ENCODE measurements at regions of chr21 and their contacts with region 1.

Region 1: GRCh38 chr21:33374450-33375096 is 28.6 kb upstream of the IFNGR2 start:
- DNase-seq: peak in 7 of 9 donors; percentile 25 to 61 (median 49)
- ATAC-seq: peak; percentile 88
- H3K4me3 ChIP-seq: no peak overlapping the region
- H3K4me3 Mint-ChIP-seq: no peak overlapping the region
- H3K27ac ChIP-seq: no peak overlapping the region
- H3K27ac Mint-ChIP-seq: peak overlapping the region in 2 of 9 donors; percentile 21 to 45
- H3K4me1 ChIP-seq: peaks cover 0 to 3% of the 10 kb centered on the region in 2 donors
- H3K4me1 Mint-ChIP-seq: peaks cover 6 to 23% (median 12%) of the 10 kb centered on the region in 7 donors
- H3K27me3 ChIP-seq: peaks cover 0 to 6% of the 10 kb centered on the region in 2 donors
- H3K27me3 Mint-ChIP-seq: peaks cover 0 to 36% (median 4%) of the 10 kb centered on the region in 5 donors

Region 2: DNA sequence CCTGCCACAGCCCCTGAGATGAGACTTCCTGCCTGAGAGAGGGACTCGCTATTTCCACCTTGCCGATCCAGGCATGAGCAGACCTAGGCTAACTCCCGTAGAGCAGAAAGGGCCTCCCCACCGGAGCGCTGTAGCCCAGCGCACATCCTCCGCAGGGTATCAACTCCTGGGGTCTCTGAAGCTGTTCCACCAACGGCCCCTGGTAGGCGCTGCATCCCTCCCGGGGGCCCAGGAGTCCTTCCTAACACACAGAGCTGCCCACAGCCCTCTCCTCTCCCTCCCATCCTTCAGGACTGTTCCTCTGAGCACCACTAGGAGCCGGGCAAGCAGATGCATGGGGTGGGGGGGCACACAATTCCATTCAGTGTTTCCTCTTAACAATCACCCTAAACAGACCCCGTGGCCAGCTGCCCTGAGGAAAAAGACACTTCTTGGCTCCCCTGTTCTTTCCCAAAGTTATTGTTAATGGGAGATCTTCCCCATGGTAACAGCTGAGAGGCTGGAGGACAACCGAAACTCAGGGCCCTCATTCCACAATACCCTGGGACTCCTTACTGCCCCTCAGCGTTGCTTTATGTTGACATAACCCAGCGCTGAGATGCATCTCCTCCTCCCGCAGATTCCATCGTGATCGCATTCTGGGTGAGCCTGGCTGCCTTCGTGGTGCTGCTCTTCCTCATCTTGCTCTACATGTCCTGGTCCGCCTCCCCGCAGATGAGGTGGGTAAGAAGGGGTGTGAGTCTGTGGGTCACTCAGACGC is 1068.4 kb before region 1 on chr21:
- CTCF ChIA-PET with region 1: no interaction called
- POLR2A ChIA-PET with region 1: no interaction called
- intact Hi-C with region 1: no loop called
- DNase-seq: no peak
- ATAC-seq: no peak
- H3K4me3 ChIP-seq: no peak overlapping the region
- H3K4me3 Mint-ChIP-seq: no peak overlapping the region
- H3K27ac ChIP-seq: no peak overlapping the region
- H3K27ac Mint-ChIP-seq: no peak overlapping the region
- H3K4me1 ChIP-seq: no peaks in the 10 kb centered on the region
- H3K4me1 Mint-ChIP-seq: peaks cover 0 to 4% (median 0%) of the 10 kb centered on the region in 7 donors
- H3K27me3 ChIP-seq: no peaks in the 10 kb centered on the region
- H3K27me3 Mint-ChIP-seq: no peaks in the 10 kb centered on the region

Region 3: GRCh38 chr21:32834916-32835235 is 539.7 kb before region 1 on chr21:
- CTCF ChIA-PET with region 1: interaction called, 3 read pairs
- POLR2A ChIA-PET with region 1: no interaction called
- intact Hi-C with region 1: loop called in 1 of 2 experiments (anchors 5 kb)
- DNase-seq: no peak
- ATAC-seq: no peak
- H3K4me3 ChIP-seq: no peak overlapping the region
- H3K4me3 Mint-ChIP-seq: no peak overlapping the region
- H3K27ac ChIP-seq: no peak overlapping the region
- H3K27ac Mint-ChIP-seq: no peak overlapping the region
- H3K4me1 ChIP-seq: no peaks in the 10 kb centered on the region
- H3K4me1 Mint-ChIP-seq: peaks cover 0 to 2% (median 0%) of the 10 kb centered on the region in 7 donors
- H3K27me3 ChIP-seq: peaks cover 0 to 5% of the 10 kb centered on the region in 2 donors
- H3K27me3 Mint-ChIP-seq: peaks cover 0 to 30% (median 0%) of the 10 kb centered on the region in 5 donors

Region 4: GRCh38 chr21:32940079-32941014 is 434.2 kb before region 1 on chr21:
- CTCF ChIA-PET with region 1: no interaction called
- POLR2A ChIA-PET with region 1: no interaction called
- intact Hi-C with region 1: loop called in 1 of 2 experiments (anchors 1 kb)
- DNase-seq: peak in 8 of 9 donors; percentile 23 to 53 (median 40)
- ATAC-seq: peak; percentile 68
- H3K4me3 ChIP-seq: no peak overlapping the region
- H3K4me3 Mint-ChIP-seq: peak overlapping the region in 2 of 10 donors; percentile 28 to 45
- H3K27ac ChIP-seq: no peak overlapping the region
- H3K27ac Mint-ChIP-seq: no peak overlapping the region
- H3K4me1 ChIP-seq: no peaks in the 10 kb centered on the region
- H3K4me1 Mint-ChIP-seq: peaks cover 0 to 9% (median 6%) of the 10 kb centered on the region in 7 donors
- H3K27me3 ChIP-seq: no peaks in the 10 kb centered on the region
- H3K27me3 Mint-ChIP-seq: peaks cover 0 to 14% (median 0%) of the 10 kb centered on the region in 5 donors

Region 5: GRCh38 chr21:32994305-32994704 is 380.3 kb before region 1 on chr21:
- CTCF ChIA-PET with region 1: no interaction called
- POLR2A ChIA-PET with region 1: no interaction called
- intact Hi-C with region 1: loop called in 1 of 2 experiments (anchors 1 kb)
- DNase-seq: peak in 1 of 9 donors; percentile 10
- ATAC-seq: no peak
- H3K4me3 ChIP-seq: no peak overlapping the region
- H3K4me3 Mint-ChIP-seq: no peak overlapping the region
- H3K27ac ChIP-seq: no peak overlapping the region
- H3K27ac Mint-ChIP-seq: no peak overlapping the region
- H3K4me1 ChIP-seq: no peaks in the 10 kb centered on the region
- H3K4me1 Mint-ChIP-seq: peaks cover 0 to 2% (median 0%) of the 10 kb centered on the region in 7 donors
- H3K27me3 ChIP-seq: no peaks in the 10 kb centered on the region
- H3K27me3 Mint-ChIP-seq: peaks cover 5 to 57% (median 20%) of the 10 kb centered on the region in 5 donors

Region 6: GRCh38 chr21:33348706-33349105 is 25.9 kb before region 1 on chr21:
- CTCF ChIA-PET with region 1: interaction called, 3 read pairs
- POLR2A ChIA-PET with region 1: interaction called, 3 read pairs
- intact Hi-C with region 1: loop called in 1 of 2 experiments (anchors 1 kb)
- DNase-seq: no peak
- ATAC-seq: no peak
- H3K4me3 ChIP-seq: no peak overlapping the region
- H3K4me3 Mint-ChIP-seq: no peak overlapping the region
- H3K27ac ChIP-seq: no peak overlapping the region
- H3K27ac Mint-ChIP-seq: peak overlapping the region in 5 of 9 donors; percentile 19 to 90 (median 74)
- H3K4me1 ChIP-seq: peaks cover 0 to 14% of the 10 kb centered on the region in 2 donors
- H3K4me1 Mint-ChIP-seq: peaks cover 6 to 42% (median 25%) of the 10 kb centered on the region in 7 donors
- H3K27me3 ChIP-seq: no peaks in the 10 kb centered on the region
- H3K27me3 Mint-ChIP-seq: no peaks in the 10 kb centered on the region

Region 7: GRCh38 chr21:34166468-34166867 is 791.9 kb after region 1 on chr21:
- CTCF ChIA-PET with region 1: no interaction called
- POLR2A ChIA-PET with region 1: no interaction called
- intact Hi-C with region 1: no loop called
- DNase-seq: peak in 1 of 9 donors; percentile 8
- ATAC-seq: no peak
- H3K4me3 ChIP-seq: no peak overlapping the region
- H3K4me3 Mint-ChIP-seq: peak overlapping the region in 1 of 10 donors; percentile 44
- H3K27ac ChIP-seq: no peak overlapping the region
- H3K27ac Mint-ChIP-seq: no peak overlapping the region
- H3K4me1 ChIP-seq: no peaks in the 10 kb centered on the region
- H3K4me1 Mint-ChIP-seq: no peaks in the 10 kb centered on the region
- H3K27me3 ChIP-seq: no peaks in the 10 kb centered on the region
- H3K27me3 Mint-ChIP-seq: no peaks in the 10 kb centered on the region

Measured in naive thymus-derived CD4-positive, alpha-beta T cell (primary cell).